Natural killer cell (primary cell): ENCODE measurements at regions of chr17 and their contacts with region 1.

Region 1: GRCh38 chr17:1724506-1725362 is at the start of gene WDR81:
- DNase-seq: peak; percentile 86 to 93
- ATAC-seq: peak; percentile 71 to 85 (median 82)
- H3K4me3 ChIP-seq: peak within 1 kb of the TSS; percentile 53
- H3K4me3 Mint-ChIP-seq: peak within 1 kb of the TSS; percentile 79
- H3K27ac ChIP-seq: peak within 1 kb of the TSS; percentile 79
- H3K27ac Mint-ChIP-seq: peak within 1 kb of the TSS; percentile 88 to 93
- H3K4me1 ChIP-seq: peaks cover 70% of the 10 kb centered on the region
- H3K4me1 Mint-ChIP-seq: peaks cover 18 to 43% of the 10 kb centered on the region in 2 donors
- H3K27me3 ChIP-seq: no peaks in the 10 kb centered on the region
- H3K27me3 Mint-ChIP-seq: no peaks in the 10 kb centered on the region
- CTCF ChIP-seq: no peak
- total RNA-seq, gene WDR81: 40.8 to 54.2 (median 46.2) TPM

Region 2: GRCh38 chr17:1555651-1556471 is 168.9 kb before region 1 on chr17:
- intact Hi-C with region 1: no loop called
- DNase-seq: no peak
- ATAC-seq: peak in 2 of 3 donors; percentile 28 to 60
- H3K4me3 ChIP-seq: no peak overlapping the region
- H3K4me3 Mint-ChIP-seq: no peak overlapping the region
- H3K27ac ChIP-seq: peak overlapping the region; percentile 9
- H3K27ac Mint-ChIP-seq: no peak overlapping the region
- H3K4me1 ChIP-seq: peaks cover 20% of the 10 kb centered on the region
- H3K4me1 Mint-ChIP-seq: peaks cover 30 to 32% of the 10 kb centered on the region in 2 donors
- H3K27me3 ChIP-seq: no peaks in the 10 kb centered on the region
- H3K27me3 Mint-ChIP-seq: no peaks in the 10 kb centered on the region
- CTCF ChIP-seq: no peak

Region 3: GRCh38 chr17:1736348-1737281 is 11.9 kb after region 1 on chr17:
- intact Hi-C with region 1: no loop called
- DNase-seq: peak in 1 of 2 donors; percentile 58
- ATAC-seq: no peak
- H3K4me3 ChIP-seq: no peak overlapping the region
- H3K4me3 Mint-ChIP-seq: no peak overlapping the region
- H3K27ac ChIP-seq: no peak overlapping the region
- H3K27ac Mint-ChIP-seq: no peak overlapping the region
- H3K4me1 ChIP-seq: no peaks in the 10 kb centered on the region
- H3K4me1 Mint-ChIP-seq: peaks cover 0 to 12% of the 10 kb centered on the region in 2 donors
- H3K27me3 ChIP-seq: no peaks in the 10 kb centered on the region
- H3K27me3 Mint-ChIP-seq: no peaks in the 10 kb centered on the region
- CTCF ChIP-seq: no peak

Region 4: DNA sequence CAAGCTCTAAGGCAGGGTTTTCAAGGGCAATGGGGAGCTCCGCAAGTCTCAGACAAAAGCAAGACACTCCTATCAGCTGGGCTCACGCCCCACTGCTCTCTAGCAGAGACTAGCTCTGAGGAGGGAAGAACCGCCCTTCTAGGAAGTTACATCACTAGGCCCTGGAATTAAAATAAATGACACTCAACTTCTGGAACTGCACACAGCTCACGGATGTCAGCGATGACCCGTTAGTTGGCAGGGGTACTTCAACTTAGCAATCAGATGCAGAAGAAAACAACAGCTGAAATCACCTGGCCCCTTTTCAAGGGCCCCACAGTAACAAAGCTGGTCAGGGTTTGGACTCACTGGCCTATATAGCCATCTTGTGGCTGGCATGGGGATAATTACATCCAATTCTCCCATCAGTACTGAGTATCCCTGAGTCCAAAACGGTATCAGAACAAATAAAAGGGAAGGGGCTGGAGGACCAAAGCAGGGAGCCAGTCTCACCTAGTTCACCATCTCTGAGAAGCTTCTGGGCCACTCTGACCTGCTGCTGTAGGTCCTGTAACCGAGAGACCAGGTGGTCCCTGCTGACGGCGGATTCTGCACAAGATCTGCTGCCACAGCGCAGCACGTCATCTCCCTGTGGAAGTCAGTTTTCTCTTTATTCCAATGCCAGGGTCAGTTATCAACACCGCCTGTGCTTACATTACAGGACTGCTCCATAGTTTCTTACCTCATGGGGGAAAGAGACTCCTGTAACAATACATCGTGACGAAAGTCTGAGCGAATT is 59.3 kb after region 1 on chr17:
- intact Hi-C with region 1: loop called (anchors 5 kb)
- DNase-seq: peak in 1 of 2 donors; percentile 49
- ATAC-seq: peak; percentile 58 to 72 (median 60)
- H3K4me3 ChIP-seq: no peak overlapping the region
- H3K4me3 Mint-ChIP-seq: no peak overlapping the region
- H3K27ac ChIP-seq: peak overlapping the region; percentile 49
- H3K27ac Mint-ChIP-seq: peak overlapping the region in 1 of 2 donors; percentile 7
- H3K4me1 ChIP-seq: peaks cover 22% of the 10 kb centered on the region
- H3K4me1 Mint-ChIP-seq: peaks cover 0 to 4% of the 10 kb centered on the region in 2 donors
- H3K27me3 ChIP-seq: no peaks in the 10 kb centered on the region
- H3K27me3 Mint-ChIP-seq: no peaks in the 10 kb centered on the region
- CTCF ChIP-seq: no peak

Region 5: DNA sequence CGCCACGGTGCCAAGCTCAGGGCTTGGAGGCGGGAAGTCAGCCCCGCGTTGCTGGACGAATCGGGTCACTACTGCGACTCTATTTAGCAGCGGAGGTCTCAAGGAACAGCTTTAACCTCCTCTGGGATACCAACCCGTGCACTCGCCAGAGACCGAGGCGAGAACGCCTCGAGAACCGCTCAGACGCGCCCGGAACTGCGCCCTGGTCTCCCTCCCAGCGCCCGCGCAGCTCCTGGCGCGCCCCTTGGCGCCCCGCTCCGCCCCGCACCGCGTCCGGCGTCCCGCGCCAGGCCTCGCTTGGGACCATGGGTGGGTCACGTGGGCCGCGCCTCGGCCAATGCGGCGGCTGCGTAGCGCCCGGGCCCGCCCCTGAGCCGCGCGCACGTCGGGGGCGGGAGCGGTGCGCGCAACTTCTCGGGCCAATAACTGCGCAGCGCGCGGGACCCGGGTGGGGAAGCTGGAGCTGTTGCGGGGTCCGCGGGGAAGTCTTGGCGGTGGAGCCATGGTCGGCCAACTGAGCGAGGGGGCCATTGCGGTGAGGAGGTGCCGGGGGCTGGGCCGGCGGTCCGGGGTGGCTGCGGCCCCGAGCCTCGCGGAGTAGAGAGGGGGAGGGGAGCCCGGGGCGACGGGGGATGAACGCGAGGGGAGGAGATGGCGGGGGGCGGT is 105.0 kb after region 1 on chr17 and contains the starts of genes RPA1 and SMYD4:
- intact Hi-C with region 1: no loop called
- DNase-seq: peak; percentile 91 to 95
- ATAC-seq: peak; percentile 97 to 100 (median 99)
- H3K4me3 ChIP-seq: peak within 1 kb of the TSS; percentile 75
- H3K4me3 Mint-ChIP-seq: peak within 1 kb of the TSS; percentile 96
- H3K27ac ChIP-seq: peak within 1 kb of the TSS; percentile 75
- H3K27ac Mint-ChIP-seq: peak within 1 kb of the TSS; percentile 91
- H3K4me1 ChIP-seq: peaks cover 26% of the 10 kb centered on the region
- H3K4me1 Mint-ChIP-seq: peaks cover 43 to 46% of the 10 kb centered on the region in 2 donors
- H3K27me3 ChIP-seq: no peaks in the 10 kb centered on the region
- H3K27me3 Mint-ChIP-seq: no peaks in the 10 kb centered on the region
- CTCF ChIP-seq: no peak
- total RNA-seq, gene RPA1: 70.9 to 101 (median 98.9) TPM
- total RNA-seq, gene SMYD4: 20.3 to 37.8 (median 24.3) TPM

Region 6: DNA sequence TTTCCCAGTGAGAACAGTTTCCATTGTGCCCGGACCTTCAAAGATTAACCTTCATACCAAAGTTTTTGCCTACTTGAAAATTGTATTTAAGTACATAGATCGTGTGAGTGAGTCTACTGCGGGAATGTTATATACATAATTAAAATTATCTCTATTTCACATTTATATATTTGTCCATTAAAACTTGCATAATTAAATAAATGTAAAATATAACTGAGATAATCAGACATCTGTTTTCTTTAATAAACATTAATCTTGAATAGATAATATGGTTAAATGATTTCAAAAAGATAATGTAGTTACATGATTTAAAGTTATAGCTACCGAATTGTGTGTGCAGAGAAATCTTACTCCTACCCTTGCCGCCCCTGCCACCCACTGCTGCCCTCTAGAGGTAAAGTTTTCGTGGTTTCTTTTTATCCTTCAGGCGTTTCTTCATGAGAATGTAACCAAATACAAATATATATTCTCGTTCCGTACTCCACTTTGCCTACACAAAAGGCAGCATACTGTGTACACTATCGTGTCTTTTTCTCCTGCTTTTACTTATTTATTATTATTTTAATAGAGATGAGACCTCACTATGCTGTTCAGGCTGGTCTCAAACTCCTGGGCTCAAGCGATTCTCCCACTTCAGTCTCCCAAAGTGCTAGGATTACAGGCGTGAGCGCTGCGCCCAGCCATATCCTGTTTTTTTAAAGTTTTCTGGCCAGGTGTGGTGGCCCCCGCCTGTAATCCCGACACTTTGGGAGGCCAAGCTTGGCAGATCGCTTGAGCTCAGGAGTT is 140.7 kb after region 1 on chr17:
- intact Hi-C with region 1: loop called (anchors 5 kb)
- DNase-seq: peak; percentile 22 to 80
- ATAC-seq: peak; percentile 72 to 78 (median 72)
- H3K4me3 ChIP-seq: no peak overlapping the region
- H3K4me3 Mint-ChIP-seq: no peak overlapping the region
- H3K27ac ChIP-seq: no peak overlapping the region
- H3K27ac Mint-ChIP-seq: no peak overlapping the region
- H3K4me1 ChIP-seq: peaks cover 3% of the 10 kb centered on the region
- H3K4me1 Mint-ChIP-seq: peaks cover 2 to 7% of the 10 kb centered on the region in 2 donors
- H3K27me3 ChIP-seq: no peaks in the 10 kb centered on the region
- H3K27me3 Mint-ChIP-seq: no peaks in the 10 kb centered on the region
- CTCF ChIP-seq: peak; percentile 71